Posterior vena cava (tissue), 2 donors: ENCODE measurements at regions of chr1 and their contacts with region 1.

Region 1: DNA sequence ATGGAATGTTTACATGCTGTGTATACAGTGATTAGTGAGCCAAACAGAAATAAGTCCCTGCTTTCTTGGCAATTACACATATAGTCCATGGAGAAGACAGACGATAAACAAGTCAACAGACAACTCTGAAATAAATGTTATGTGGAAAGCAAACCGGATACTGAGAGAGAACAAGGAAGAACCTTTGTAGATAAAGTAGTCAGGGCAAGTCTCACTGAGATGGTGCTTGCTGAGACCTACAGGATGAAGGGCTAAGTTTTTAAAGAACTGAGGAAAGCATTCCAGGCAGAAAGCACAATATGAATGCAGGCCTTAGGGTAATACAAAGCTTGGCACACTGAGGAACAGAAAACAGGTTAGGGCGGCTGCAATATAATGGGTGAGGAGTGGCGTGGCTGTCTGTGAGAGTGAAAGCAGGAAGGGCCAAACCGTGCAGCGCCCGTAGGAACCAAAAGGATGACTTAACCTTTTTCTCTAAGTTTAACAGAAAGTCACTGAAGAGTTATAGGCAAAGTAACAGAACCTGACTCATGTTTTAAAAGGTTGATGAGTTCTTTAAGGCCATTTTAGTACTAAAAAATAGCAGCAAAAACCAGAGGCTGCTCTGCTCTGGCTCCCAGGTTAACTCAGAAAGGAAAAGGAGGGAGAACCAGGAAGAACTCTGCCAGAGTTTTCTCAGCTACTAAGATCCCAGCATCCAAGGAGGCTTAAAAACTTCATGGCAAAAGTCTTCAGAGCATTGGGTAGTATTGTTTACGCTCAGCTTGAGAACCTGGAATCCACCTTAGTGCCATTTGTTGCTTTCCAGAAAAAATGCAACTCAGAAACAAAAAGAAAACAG is 8.7 kb upstream of the TTF2 start:
- DNase-seq: no peak

Region 2: GRCh38 chr1:116737020-116737854 is 314.2 kb before region 1 on chr1:
- intact Hi-C with region 1: loop called (anchors 2 to 5 kb)
- DNase-seq: no peak